ENCODE measurements at regions of chr10 and their contacts with region 1.

Region 1: DNA sequence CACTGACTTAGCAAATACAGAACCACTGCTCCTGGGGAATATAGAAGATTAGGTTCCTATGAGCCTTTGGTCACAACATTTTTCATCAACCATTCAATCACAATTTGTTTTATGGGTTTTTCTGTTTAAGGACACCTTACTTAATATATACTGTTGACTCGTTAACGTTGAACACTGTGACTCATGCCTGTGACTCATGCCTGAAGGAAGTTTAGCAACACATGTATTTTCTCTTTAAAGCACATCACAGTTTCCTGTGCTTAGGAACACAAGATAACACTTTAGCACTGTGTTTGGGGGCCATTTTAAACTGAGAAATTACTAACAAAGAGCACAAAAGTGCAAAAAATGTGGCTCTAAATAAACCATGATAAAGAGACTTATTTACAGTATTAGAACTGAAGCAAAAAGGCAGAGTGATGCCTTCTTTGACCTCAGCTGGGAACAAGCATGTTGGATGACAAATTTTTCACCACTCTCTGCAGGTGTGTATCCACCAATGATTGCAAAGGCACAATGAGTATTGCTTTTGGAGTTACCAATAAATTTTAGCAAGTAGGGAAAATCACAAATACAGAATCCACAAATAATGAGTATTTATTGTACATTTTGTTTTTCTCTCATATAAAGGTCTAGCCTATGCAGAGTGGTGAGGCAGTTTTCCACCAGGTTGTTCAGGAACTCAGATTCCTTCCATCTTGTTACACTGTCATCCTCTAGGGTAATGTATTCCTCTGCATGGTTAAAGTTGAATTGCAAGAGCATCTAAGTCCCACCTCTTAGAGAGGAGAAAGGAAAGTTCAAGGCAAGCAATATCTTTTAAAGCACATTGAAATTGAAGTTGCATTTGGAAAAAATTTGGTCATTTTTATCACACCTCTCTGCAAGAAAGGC is 7.3 kb downstream of the FGFBP3 start:
- DNase-seq: peak; percentile 92
- H3K4me3 ChIP-seq: no peak overlapping the region
- H3K27ac ChIP-seq: peak overlapping the region; percentile 59
- H3K4me1 ChIP-seq: peaks cover 18% of the 10 kb centered on the region
- H3K27me3 ChIP-seq: no peaks in the 10 kb centered on the region
- CTCF ChIP-seq: no peak

Region 2: GRCh38 chr10:91829268-91829667 is 72.8 kb before region 1 on chr10:
- CTCF ChIA-PET with region 1: no interaction called
- dilution Hi-C with region 1: loop called (anchors 5 kb)
- in situ Hi-C with region 1: no loop called
- intact Hi-C with region 1: no loop called
- DNase-seq: no peak
- H3K4me3 ChIP-seq: no peak overlapping the region
- H3K27ac ChIP-seq: no peak overlapping the region
- H3K4me1 ChIP-seq: no peaks in the 10 kb centered on the region
- H3K27me3 ChIP-seq: no peaks in the 10 kb centered on the region
- CTCF ChIP-seq: no peak

Region 3: GRCh38 chr10:91887272-91888076 is 14.6 kb before region 1 on chr10:
- CTCF ChIA-PET with region 1: no interaction called
- dilution Hi-C with region 1: no loop called
- in situ Hi-C with region 1: no loop called
- intact Hi-C with region 1: loop called (anchors 2 kb)
- DNase-seq: no peak
- H3K4me3 ChIP-seq: peak overlapping the region; percentile 40 to 46 (median 44)
- H3K27ac ChIP-seq: no peak overlapping the region
- H3K4me1 ChIP-seq: peaks cover 13% of the 10 kb centered on the region
- H3K27me3 ChIP-seq: no peaks in the 10 kb centered on the region
- CTCF ChIP-seq: no peak